A549 (cell line): ENCODE measurements at regions of chr19 and their contacts with region 1.

Region 1: GRCh38 chr19:869245-870177 is 10.0 kb downstream of the CFD start:
- DNase-seq: peak; percentile 66 to 89
- ATAC-seq: peak; percentile 26 to 45; a peak in 4 of 6 replicates
- H3K4me3 ChIP-seq: no peak overlapping the region
- H3K27ac ChIP-seq: peak overlapping the region; percentile 81 to 95
- H3K4me1 ChIP-seq: peaks cover 48% of the 10 kb centered on the region
- CTCF ChIP-seq: no peak
- EP300 ChIP-seq: no peak
- POLR2A ChIP-seq: no peak
- RAD21 ChIP-seq: no peak

Region 2: DNA sequence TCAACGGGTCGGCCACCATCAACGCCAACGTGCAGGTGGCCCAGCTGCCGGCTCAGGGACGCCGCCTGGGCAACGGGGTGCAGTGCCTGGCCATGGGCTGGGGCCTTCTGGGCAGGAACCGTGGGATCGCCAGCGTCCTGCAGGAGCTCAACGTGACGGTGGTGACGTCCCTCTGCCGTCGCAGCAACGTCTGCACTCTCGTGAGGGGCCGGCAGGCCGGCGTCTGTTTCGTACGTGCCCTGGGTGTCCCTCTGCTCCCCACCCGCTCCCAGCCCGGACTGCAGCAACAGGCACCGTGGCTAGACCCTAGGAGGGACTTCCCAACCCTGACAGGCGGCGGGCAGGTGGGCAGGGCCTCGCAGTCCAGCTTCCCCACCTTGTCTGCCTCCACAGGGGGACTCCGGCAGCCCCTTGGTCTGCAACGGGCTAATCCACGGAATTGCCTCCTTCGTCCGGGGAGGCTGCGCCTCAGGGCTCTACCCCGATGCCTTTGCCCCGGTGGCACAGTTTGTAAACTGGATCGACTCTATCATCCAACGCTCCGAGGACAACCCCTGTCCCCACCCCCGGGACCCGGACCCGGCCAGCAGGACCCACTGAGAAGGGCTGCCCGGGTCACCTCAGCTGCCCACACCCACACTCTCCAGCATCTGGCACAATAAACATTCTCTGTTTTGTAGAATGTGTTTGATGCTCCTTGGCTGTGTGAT is 13.8 kb before region 1 on chr19:
- CTCF ChIA-PET with region 1: interaction called, 13 read pairs
- POLR2A ChIA-PET with region 1: no interaction called
- DNase-seq: no peak
- ATAC-seq: no peak
- H3K4me3 ChIP-seq: no peak overlapping the region
- H3K27ac ChIP-seq: no peak overlapping the region; a peak in 1 of 6 replicates
- H3K4me1 ChIP-seq: peaks cover 21% of the 10 kb centered on the region
- CTCF ChIP-seq: no peak
- EP300 ChIP-seq: no peak
- POLR2A ChIP-seq: no peak
- RAD21 ChIP-seq: no peak